ENCODE measurements at regions of chr16 and their contacts with region 1.

Region 1: DNA sequence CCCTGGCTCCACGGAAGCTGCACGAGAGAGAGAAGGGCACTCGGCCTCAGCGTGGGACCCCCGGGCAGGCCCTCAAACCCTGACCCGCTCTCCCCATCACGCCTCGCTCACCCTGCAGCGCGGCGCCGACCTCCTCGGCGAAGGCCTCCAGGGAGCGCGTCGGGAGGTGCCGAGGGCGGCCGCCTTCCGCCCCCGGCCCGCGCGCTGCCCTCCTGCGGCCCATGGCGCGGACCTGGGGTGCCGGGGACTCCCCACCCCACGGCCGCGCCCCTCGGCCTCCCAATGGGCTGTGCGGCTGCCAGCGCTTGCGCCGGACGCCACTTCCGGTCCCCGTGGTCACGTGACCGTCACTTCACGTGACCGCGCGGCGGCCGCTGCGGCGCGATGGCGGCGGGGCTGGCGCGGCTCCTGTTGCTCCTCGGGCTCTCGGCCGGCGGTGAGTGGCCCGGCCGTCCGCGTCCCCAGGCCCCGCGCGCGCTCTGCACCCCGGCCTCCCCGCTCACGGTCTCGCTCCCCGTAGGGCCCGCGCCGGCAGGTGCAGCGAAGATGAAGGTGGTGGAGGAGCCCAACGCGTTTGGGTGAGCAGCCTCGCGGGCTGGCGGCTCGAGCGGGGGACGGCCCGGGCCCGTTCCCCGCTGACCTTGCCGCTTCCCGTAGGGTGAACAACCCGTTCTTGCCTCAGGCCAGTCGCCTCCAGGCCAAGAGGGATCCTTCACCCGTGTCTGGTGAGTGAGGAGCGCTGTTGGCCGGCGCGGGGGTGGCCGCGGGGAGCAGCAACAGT is at the starts of genes GNPTG and TSR3:
- DNase-seq: peak; percentile 90 to 93 (median 91)
- H3K4me3 ChIP-seq: peak within 1 kb of the TSS; percentile 91 to 97 (median 95)
- H3K4me3 Mint-ChIP-seq: peak within 1 kb of the TSS; percentile 92 to 98
- H3K27ac ChIP-seq: peak within 1 kb of the TSS; percentile 59 to 88
- H3K27ac Mint-ChIP-seq: peak within 1 kb of the TSS; percentile 82 to 93 (median 89)
- H3K4me1 ChIP-seq: peaks cover 21 to 32% of the 10 kb centered on the region in 2 donors
- H3K4me1 Mint-ChIP-seq: peaks cover 36% of the 10 kb centered on the region
- H3K27me3 ChIP-seq: no peaks in the 10 kb centered on the region
- H3K27me3 Mint-ChIP-seq: no peaks in the 10 kb centered on the region
- CTCF ChIP-seq: no peak
- polyA plus RNA-seq, gene GNPTG: 74.7 to 130 (median 82.5) TPM
- polyA plus RNA-seq, gene TSR3: 23.2 to 73.1 (median 48.2) TPM

Region 2: DNA sequence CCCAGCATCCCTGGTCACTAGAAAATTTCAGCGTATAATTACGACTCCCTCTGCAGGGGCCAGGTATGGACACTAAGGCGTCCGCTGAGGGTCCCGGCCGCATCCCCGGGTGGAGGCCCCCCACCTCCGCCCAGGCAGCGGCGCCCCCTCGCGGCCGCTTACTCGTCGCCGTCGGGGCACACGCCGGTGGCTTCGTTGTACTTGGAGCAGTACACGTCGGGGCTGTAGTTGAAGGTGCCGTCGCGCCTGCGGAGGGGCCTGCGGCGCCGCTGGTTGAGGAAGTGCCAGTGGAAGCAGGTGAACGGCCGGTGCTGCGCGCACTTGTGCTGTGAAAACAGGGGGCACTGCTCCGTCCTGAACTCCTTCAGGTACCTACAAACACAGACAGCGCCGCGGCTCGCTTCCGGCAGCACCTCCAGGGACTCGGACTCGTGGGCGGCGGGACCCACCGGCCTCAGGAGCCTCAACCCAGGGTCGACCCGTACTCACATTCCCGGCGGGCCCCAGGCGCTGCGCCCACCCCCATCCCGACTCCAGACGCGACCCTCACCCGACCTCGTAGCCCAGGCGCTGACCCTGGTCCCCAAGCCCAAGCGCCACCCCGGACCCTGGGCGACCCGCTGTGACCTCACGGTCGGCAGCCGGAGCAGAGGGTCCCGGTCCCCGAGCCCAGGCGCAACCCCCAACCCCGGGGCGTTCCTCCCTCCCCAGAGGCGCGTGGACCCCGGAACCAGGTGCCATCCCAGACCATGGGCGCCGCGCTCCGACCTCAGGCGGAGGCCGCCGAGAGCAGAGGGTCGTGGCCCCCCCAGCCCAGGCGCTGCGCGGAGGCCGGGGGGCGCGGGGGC is 62.1 kb after region 1 on chr16:
- intact Hi-C with region 1: loop called in 1 of 2 experiments (anchors 10 kb)
- DNase-seq: peak; percentile 39 to 60 (median 49)
- H3K4me3 ChIP-seq: peak overlapping the region; percentile 80 to 94 (median 85)
- H3K4me3 Mint-ChIP-seq: peak overlapping the region; percentile 89
- H3K27ac ChIP-seq: peak overlapping the region; percentile 25 to 83
- H3K27ac Mint-ChIP-seq: peak overlapping the region; percentile 38 to 91 (median 85)
- H3K4me1 ChIP-seq: peaks cover 13 to 20% of the 10 kb centered on the region in 2 donors
- H3K4me1 Mint-ChIP-seq: peaks cover 13% of the 10 kb centered on the region
- H3K27me3 ChIP-seq: no peaks in the 10 kb centered on the region
- H3K27me3 Mint-ChIP-seq: peaks cover 0 to 1% (median 0%) of the 10 kb centered on the region in 3 donors
- CTCF ChIP-seq: peak; percentile 76